ENCODE measurements at regions of chr7 and their contacts with region 1.

Region 1: DNA sequence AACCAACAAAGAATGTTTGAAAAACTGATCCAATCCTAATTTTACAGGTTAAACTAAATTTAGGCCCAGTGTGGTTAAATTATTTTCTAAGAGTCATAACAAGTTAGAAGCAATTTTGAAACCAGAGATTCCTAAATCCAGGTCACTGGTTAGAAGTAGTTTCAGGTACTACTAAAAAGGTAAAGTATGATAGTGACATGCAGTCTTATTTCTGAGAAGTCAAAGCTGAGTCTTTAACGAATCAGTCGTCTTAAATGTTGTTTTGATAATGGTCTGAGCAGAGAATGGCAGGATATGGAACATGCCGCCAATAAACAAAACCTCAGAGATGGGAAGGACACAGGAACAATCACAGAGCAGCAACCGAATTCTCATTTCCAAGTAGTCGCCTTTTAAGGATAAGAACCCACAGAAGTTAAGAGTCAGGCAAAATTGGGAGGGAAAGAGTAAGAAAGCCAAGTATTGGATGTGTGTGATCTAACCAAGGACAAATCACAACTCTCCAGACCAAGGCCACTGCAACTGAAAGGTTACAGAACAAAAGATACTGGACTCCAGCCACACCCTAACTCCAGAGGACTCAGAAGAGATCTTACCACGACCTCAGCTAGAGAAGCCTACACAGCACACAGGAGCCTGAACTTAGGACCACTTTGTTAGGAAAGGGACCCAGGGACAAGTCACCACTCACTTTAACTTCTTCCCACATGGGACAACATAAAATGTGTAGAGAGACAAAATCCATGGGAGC is 19.7 kb downstream of the TMEM243 start:
- DNase-seq: no peak
- ATAC-seq: peak in 1 of 4 donors; percentile 25
- H3K4me3 ChIP-seq: no peak overlapping the region
- H3K27ac ChIP-seq: no peak overlapping the region
- H3K4me1 ChIP-seq: peaks cover 6% of the 10 kb centered on the region
- H3K27me3 ChIP-seq: no peaks in the 10 kb centered on the region
- CTCF ChIP-seq: no peak

Region 2: DNA sequence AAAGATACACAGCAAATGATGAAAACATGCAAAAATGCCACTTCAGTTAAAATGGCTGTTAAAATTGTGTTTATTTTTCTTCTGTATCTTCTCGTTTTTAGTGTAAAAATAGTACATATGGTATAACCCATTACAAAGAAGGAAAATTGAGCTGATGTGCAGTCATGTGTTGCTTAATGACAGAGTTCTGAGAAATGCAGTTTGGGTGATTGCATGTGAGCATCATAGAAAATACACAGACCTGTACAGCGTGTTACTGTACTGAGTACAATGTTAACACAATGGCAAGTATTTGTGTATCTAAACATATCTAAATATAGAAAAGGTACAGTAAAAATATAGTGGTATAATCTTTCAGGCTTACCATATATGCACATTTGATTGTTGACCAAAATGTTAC is 40.3 kb before region 1 on chr7:
- intact Hi-C with region 1: loop called in 1 of 2 experiments (anchors 5 kb)
- DNase-seq: no peak
- ATAC-seq: peak in 1 of 4 donors; percentile 42
- H3K4me3 ChIP-seq: no peak overlapping the region
- H3K27ac ChIP-seq: no peak overlapping the region
- H3K4me1 ChIP-seq: peaks cover 37% of the 10 kb centered on the region
- H3K27me3 ChIP-seq: no peaks in the 10 kb centered on the region
- CTCF ChIP-seq: no peak

Region 3: DNA sequence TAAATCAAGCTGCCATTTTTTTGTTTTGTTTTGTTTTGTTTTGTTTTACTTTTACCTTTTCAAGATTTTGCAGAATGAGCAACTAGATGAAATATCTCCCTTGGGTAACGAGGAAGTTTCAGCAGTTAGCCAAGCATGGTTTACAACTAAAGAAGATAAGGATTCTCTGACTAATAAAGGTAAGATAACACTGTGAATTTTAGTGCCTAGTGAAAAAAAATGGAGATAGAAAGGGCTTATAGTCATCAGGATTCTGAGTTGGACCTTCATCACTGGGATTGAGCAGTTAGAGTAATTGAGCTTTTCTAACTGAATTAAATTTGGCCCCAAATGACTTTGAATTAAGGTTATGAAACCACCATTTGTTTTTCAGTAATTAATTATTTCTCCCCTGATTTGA is 26.4 kb before region 1 on chr7:
- intact Hi-C with region 1: loop called in 1 of 2 experiments (anchors 5 kb)
- DNase-seq: no peak
- ATAC-seq: no peak
- H3K4me3 ChIP-seq: no peak overlapping the region
- H3K27ac ChIP-seq: no peak overlapping the region
- H3K4me1 ChIP-seq: no peaks in the 10 kb centered on the region
- H3K27me3 ChIP-seq: no peaks in the 10 kb centered on the region
- CTCF ChIP-seq: no peak

Region 4: GRCh38 chr7:87435546-87435945 is 235.7 kb after region 1 on chr7:
- intact Hi-C with region 1: loop called in 1 of 2 experiments (anchors 10 kb)
- DNase-seq: no peak
- ATAC-seq: no peak
- H3K4me3 ChIP-seq: no peak overlapping the region
- H3K27ac ChIP-seq: no peak overlapping the region
- H3K4me1 ChIP-seq: no peaks in the 10 kb centered on the region
- H3K27me3 ChIP-seq: no peaks in the 10 kb centered on the region
- CTCF ChIP-seq: no peak

Measured in psoas muscle (tissue), 8 donors.